ENCODE measurements at regions of chrX and their contacts with region 1.

Region 1: GRCh38 chrX:103711533-103712369 is 1.0 kb downstream of the TMEM31 start:
- DNase-seq: peak; percentile 66
- H3K4me3 ChIP-seq: no peak overlapping the region
- H3K27ac ChIP-seq: no peak overlapping the region
- H3K4me1 ChIP-seq: no peaks in the 10 kb centered on the region
- H3K27me3 ChIP-seq: no peaks in the 10 kb centered on the region
- CTCF ChIP-seq: peak; percentile 68

Region 2: DNA sequence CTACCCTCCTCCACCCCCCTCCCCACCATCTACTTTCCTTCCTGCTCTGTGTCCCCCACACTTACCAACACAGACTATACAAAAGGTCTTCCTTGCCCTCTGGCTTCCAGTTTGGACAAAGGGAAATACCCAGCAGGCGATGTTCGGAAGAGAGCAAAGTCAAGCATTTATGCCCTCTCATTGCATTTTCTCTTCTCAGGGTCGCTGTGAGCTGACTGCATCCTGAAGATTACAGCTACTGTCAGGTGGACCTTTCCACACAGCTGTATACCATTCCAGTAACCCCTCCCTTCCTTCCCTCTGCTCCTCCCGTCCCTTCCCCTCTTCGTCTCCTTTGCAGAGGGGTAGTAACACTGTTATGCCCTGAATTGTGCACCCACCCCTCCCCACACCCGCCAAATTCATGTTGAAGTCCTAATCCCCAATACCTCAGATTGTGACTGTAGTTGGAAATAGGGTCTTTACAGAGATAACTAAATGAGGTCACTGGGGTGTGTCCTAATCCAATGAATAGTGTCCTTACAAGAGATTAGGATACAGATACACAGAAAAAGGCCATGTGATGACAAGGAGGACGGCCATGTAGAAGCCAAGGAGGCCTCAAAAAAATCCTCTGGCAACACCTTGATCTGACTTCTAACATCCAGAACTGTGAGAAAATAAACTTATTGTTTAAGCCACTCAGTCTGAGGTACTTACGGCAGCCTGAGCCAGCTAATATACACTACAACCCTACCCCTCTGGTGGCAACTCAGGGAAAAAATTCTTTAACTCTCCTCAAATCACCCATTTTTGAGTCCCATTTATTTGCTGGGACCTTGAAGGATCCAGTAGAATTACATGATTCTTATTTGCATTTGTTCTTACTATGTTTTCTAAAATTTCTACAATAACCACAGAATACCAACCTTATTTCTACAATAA is 37.0 kb before region 1 on chrX:
- intact Hi-C with region 1: no loop called
- DNase-seq: no peak
- H3K4me3 ChIP-seq: no peak overlapping the region
- H3K27ac ChIP-seq: no peak overlapping the region
- H3K4me1 ChIP-seq: no peaks in the 10 kb centered on the region
- H3K27me3 ChIP-seq: no peaks in the 10 kb centered on the region
- CTCF ChIP-seq: no peak

Region 3: GRCh38 chrX:103779141-103779789 is 67.5 kb after region 1 on chrX:
- intact Hi-C with region 1: loop called (anchors 5 kb)
- DNase-seq: no peak
- H3K4me3 ChIP-seq: no peak overlapping the region
- H3K27ac ChIP-seq: no peak overlapping the region
- H3K4me1 ChIP-seq: no peaks in the 10 kb centered on the region
- H3K27me3 ChIP-seq: no peaks in the 10 kb centered on the region
- CTCF ChIP-seq: no peak

Region 4: DNA sequence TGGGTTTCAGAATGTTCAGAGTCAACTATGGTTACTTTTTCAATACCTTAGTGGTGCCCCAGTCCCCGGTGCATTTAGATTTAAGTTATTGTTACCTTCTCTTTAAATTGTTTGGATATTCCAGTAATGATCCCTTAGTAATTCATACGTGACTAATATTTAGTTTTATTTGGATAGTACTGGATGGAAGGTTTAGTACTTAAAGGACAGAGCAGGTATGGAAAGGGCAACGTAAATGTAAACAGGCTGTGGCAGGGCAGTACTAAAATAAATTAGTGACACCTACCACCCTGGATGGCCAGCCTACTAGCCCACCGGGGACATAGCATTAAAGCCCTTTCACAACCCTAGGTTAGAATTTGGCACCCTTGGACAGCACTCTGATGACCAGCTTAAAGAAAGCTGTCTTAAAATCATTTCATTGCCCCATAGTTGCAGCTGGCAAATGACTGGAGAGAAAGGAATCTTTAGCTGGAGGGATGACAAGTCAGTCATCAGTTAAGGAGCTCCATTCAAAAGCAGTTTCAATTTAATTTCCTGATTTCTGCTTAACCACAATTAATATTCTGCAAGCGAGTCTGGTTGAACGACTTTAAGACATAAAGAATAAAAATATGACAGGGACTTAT is 81.3 kb after region 1 on chrX:
- intact Hi-C with region 1: no loop called
- DNase-seq: no peak
- H3K4me3 ChIP-seq: no peak overlapping the region
- H3K27ac ChIP-seq: no peak overlapping the region
- H3K4me1 ChIP-seq: no peaks in the 10 kb centered on the region
- H3K27me3 ChIP-seq: no peaks in the 10 kb centered on the region
- CTCF ChIP-seq: no peak

Region 5: DNA sequence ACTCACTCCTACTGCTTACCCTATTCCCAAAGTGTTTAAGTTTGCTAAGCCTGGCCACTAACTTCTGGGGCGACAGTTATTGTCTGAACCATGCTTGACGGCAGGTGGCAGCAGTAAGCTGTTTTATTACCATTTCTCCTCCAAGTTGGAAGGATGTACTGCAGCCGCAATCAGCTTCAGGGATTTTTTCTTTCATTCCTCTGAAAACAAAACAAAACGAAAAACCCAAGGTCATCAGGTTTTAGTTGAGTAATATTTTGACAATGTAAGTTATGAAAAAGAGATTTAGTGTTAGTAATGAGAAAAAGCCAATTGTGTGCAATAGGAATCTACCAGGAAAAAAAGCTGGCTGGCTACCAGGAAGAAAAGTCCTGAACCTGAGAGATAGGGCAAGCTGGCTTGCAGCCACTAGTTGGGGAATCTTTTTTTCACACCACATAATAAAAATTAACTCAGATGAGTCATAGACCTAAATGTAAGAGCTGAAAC is 133.5 kb after region 1 on chrX:
- intact Hi-C with region 1: no loop called
- DNase-seq: peak; percentile 80
- H3K4me3 ChIP-seq: no peak overlapping the region
- H3K27ac ChIP-seq: no peak overlapping the region
- H3K4me1 ChIP-seq: no peaks in the 10 kb centered on the region
- H3K27me3 ChIP-seq: no peaks in the 10 kb centered on the region
- CTCF ChIP-seq: peak; percentile 66

Measured in colonic mucosa (tissue), 4 donors.